ENCODE measurements at regions of chr11 and their contacts with region 1.

Region 1: GRCh38 chr11:129922674-129923073 is 27.3 kb upstream of the NFRKB start:
- DNase-seq: no peak
- H3K4me3 ChIP-seq: no peak overlapping the region
- H3K27ac ChIP-seq: no peak overlapping the region
- H3K4me1 ChIP-seq: no peaks in the 10 kb centered on the region
- H3K27me3 ChIP-seq: no peaks in the 10 kb centered on the region
- CTCF ChIP-seq: no peak
- POLR2A ChIP-seq: no peak

Region 2: GRCh38 chr11:129209891-129210830 is 712.5 kb before region 1 on chr11:
- intact Hi-C with region 1: loop called (anchors 10 kb)
- DNase-seq: no peak
- H3K4me3 ChIP-seq: no peak overlapping the region
- H3K27ac ChIP-seq: no peak overlapping the region
- H3K4me1 ChIP-seq: no peaks in the 10 kb centered on the region
- H3K27me3 ChIP-seq: no peaks in the 10 kb centered on the region
- CTCF ChIP-seq: no peak
- POLR2A ChIP-seq: no peak

Region 3: GRCh38 chr11:129911298-129911697 is 11.4 kb before region 1 on chr11:
- intact Hi-C with region 1: no loop called
- DNase-seq: no peak
- H3K4me3 ChIP-seq: no peak overlapping the region
- H3K27ac ChIP-seq: no peak overlapping the region
- H3K4me1 ChIP-seq: no peaks in the 10 kb centered on the region
- H3K27me3 ChIP-seq: no peaks in the 10 kb centered on the region
- CTCF ChIP-seq: no peak
- POLR2A ChIP-seq: no peak

Region 4: GRCh38 chr11:130131961-130132850 is 209.5 kb after region 1 on chr11:
- intact Hi-C with region 1: loop called (anchors 5 kb)
- DNase-seq: peak in 1 of 2 donors; percentile 38
- H3K4me3 ChIP-seq: no peak overlapping the region
- H3K27ac ChIP-seq: no peak overlapping the region
- H3K4me1 ChIP-seq: no peaks in the 10 kb centered on the region
- H3K27me3 ChIP-seq: no peaks in the 10 kb centered on the region
- CTCF ChIP-seq: peak; percentile 50 to 84 (median 82)
- POLR2A ChIP-seq: no peak